Activated CD4-positive, alpha-beta T cell treated with anti-CD3 and anti-CD28 coated beads, Interleukin-2, amount 10 ng/mL, durations not matched to agents 7 days and 5 days (primary cell): ENCODE measurements at regions of chrX and their contacts with region 1.

Region 1: GRCh38 chrX:84748965-84749656 is 246.9 kb upstream of the HDX start:
- DNase-seq: no peak
- H3K4me3 Mint-ChIP-seq: no peak overlapping the region
- H3K27ac Mint-ChIP-seq: no peak overlapping the region
- H3K4me1 Mint-ChIP-seq: no peaks in the 10 kb centered on the region
- H3K27me3 Mint-ChIP-seq: no peaks in the 10 kb centered on the region

Region 2: GRCh38 chrX:84729809-84730208 is 19.3 kb before region 1 on chrX:
- CTCF ChIA-PET with region 1: no interaction called
- POLR2A ChIA-PET with region 1: interaction called, 14 read pairs
- DNase-seq: peak; percentile 5
- H3K4me3 Mint-ChIP-seq: no peak overlapping the region
- H3K27ac Mint-ChIP-seq: no peak overlapping the region
- H3K4me1 Mint-ChIP-seq: no peaks in the 10 kb centered on the region
- H3K27me3 Mint-ChIP-seq: no peaks in the 10 kb centered on the region

Region 3: DNA sequence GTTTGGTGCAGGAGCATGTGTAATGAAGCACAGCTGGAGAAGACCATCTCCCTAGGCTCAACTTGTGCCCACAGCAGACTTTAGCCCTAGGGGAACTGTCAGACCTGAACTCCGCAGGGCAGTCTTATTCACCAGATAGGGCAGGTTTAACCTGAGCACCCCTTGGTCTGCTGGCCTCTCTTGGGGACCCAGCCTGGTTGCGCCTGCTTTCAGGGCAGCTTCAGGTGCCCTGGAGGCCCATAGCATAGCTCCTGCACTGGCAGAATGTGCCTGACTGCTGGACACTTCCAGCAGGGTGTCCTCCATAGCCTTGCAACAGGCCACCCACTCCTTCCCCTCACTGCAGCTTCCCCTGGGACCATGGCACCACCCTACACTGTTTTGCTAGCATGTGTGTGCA is 41.7 kb after region 1 on chrX:
- CTCF ChIA-PET with region 1: no interaction called
- POLR2A ChIA-PET with region 1: no interaction called
- DNase-seq: no peak
- H3K4me3 Mint-ChIP-seq: no peak overlapping the region
- H3K27ac Mint-ChIP-seq: no peak overlapping the region
- H3K4me1 Mint-ChIP-seq: no peaks in the 10 kb centered on the region
- H3K27me3 Mint-ChIP-seq: no peaks in the 10 kb centered on the region